ENCODE measurements at regions of chr19 and their contacts with region 1.

Region 1: GRCh38 chr19:13262450-13262849 is 112.2 kb downstream of the IER2 start:
- DNase-seq: peak in 6 of 9 donors; percentile 21 to 61 (median 52)
- ATAC-seq: peak; percentile 73
- H3K4me3 ChIP-seq: no peak overlapping the region
- H3K4me3 Mint-ChIP-seq: no peak overlapping the region
- H3K27ac ChIP-seq: no peak overlapping the region
- H3K27ac Mint-ChIP-seq: peak overlapping the region in 3 of 9 donors; percentile 5 to 84 (median 47)
- H3K4me1 ChIP-seq: no peaks in the 10 kb centered on the region
- H3K4me1 Mint-ChIP-seq: peaks cover 0 to 15% (median 0%) of the 10 kb centered on the region in 7 donors
- H3K27me3 ChIP-seq: no peaks in the 10 kb centered on the region
- H3K27me3 Mint-ChIP-seq: peaks cover 0 to 21% (median 10%) of the 10 kb centered on the region in 5 donors

Region 2: DNA sequence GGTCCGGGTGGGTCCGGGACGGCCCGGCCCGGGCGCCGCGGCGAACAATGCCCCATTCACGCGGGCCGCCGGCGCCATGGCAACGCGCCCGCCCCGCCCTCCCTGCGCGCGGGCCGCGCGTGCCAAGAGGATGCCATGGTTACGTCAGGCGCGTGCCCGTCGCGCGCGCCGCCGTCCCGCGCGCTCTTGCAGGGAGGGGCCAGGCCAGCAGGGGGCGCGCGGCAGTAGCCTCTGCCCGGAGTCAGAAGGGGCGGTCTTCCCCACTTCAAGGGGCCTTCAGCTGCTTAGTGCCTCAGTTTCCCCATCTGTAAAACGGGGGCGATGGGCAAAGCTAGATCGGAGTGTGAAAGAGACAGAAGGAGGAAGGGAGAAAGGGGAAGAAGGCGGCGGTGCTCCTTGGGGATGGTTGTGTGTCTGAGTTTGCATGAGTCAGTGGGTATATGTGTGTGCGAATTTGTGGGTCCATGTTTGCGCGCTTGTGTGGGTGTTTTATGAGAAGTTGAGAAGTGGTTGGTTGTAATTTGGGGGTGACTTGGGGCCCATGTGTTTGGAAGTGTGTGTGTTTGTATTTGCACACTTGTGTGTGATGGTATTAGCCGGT is 278.8 kb before region 1 on chr19:
- CTCF ChIA-PET with region 1: interaction called, 14 read pairs
- POLR2A ChIA-PET with region 1: no interaction called
- intact Hi-C with region 1: loop called (anchors 1 to 2 kb)
- DNase-seq: peak; percentile 72 to 93 (median 84)
- ATAC-seq: peak; percentile 94
- H3K4me3 ChIP-seq: no peak overlapping the region
- H3K4me3 Mint-ChIP-seq: no peak overlapping the region
- H3K27ac ChIP-seq: peak overlapping the region; percentile 32
- H3K27ac Mint-ChIP-seq: no peak overlapping the region
- H3K4me1 ChIP-seq: peaks cover 6 to 16% of the 10 kb centered on the region in 2 donors
- H3K4me1 Mint-ChIP-seq: peaks cover 0 to 9% (median 0%) of the 10 kb centered on the region in 7 donors
- H3K27me3 ChIP-seq: no peaks in the 10 kb centered on the region
- H3K27me3 Mint-ChIP-seq: peaks cover 0 to 11% (median 0%) of the 10 kb centered on the region in 5 donors

Region 3: GRCh38 chr19:12994701-12995595 is 267.5 kb before region 1 on chr19 and contains the start of gene NFIX:
- CTCF ChIA-PET with region 1: no interaction called
- POLR2A ChIA-PET with region 1: no interaction called
- intact Hi-C with region 1: no loop called
- DNase-seq: peak; percentile 37 to 76 (median 54)
- ATAC-seq: peak; percentile 75
- H3K4me3 ChIP-seq: peak within 1 kb of the TSS; percentile 43
- H3K4me3 Mint-ChIP-seq: peak within 1 kb of the TSS; percentile 84 to 97 (median 93)
- H3K27ac ChIP-seq: no peak within 1 kb of the TSS
- H3K27ac Mint-ChIP-seq: peak within 1 kb of the TSS; percentile 27 to 95 (median 82)
- H3K4me1 ChIP-seq: no peaks in the 10 kb centered on the region
- H3K4me1 Mint-ChIP-seq: peaks cover 6 to 22% (median 13%) of the 10 kb centered on the region in 7 donors
- H3K27me3 ChIP-seq: no peaks in the 10 kb centered on the region
- H3K27me3 Mint-ChIP-seq: peaks cover 0 to 39% (median 5%) of the 10 kb centered on the region in 5 donors
- total RNA-seq, gene NFIX: 2.4 to 7.7 (median 6.3) TPM

Region 4: GRCh38 chr19:13104360-13104847 is 158.0 kb before region 1 on chr19:
- CTCF ChIA-PET with region 1: no interaction called
- POLR2A ChIA-PET with region 1: interaction called, 4 read pairs
- intact Hi-C with region 1: loop called in 1 of 2 experiments (anchors 1 kb)
- DNase-seq: peak; percentile 48 to 78 (median 62)
- ATAC-seq: peak; percentile 67
- H3K4me3 ChIP-seq: peak overlapping the region; percentile 82
- H3K4me3 Mint-ChIP-seq: peak overlapping the region; percentile 80 to 97 (median 93)
- H3K27ac ChIP-seq: peak overlapping the region; percentile 74
- H3K27ac Mint-ChIP-seq: peak overlapping the region; percentile 71 to 94 (median 87)
- H3K4me1 ChIP-seq: peaks cover 46 to 48% of the 10 kb centered on the region in 2 donors
- H3K4me1 Mint-ChIP-seq: peaks cover 0 to 36% (median 30%) of the 10 kb centered on the region in 7 donors
- H3K27me3 ChIP-seq: no peaks in the 10 kb centered on the region
- H3K27me3 Mint-ChIP-seq: peaks cover 0 to 3% (median 0%) of the 10 kb centered on the region in 5 donors

Region 5: GRCh38 chr19:13808856-13809255 is 546.4 kb after region 1 on chr19:
- CTCF ChIA-PET with region 1: no interaction called
- POLR2A ChIA-PET with region 1: no interaction called
- intact Hi-C with region 1: no loop called
- DNase-seq: no peak
- ATAC-seq: no peak
- H3K4me3 ChIP-seq: no peak overlapping the region
- H3K4me3 Mint-ChIP-seq: no peak overlapping the region
- H3K27ac ChIP-seq: no peak overlapping the region
- H3K27ac Mint-ChIP-seq: no peak overlapping the region
- H3K4me1 ChIP-seq: no peaks in the 10 kb centered on the region
- H3K4me1 Mint-ChIP-seq: peaks cover 0 to 4% (median 0%) of the 10 kb centered on the region in 7 donors
- H3K27me3 ChIP-seq: no peaks in the 10 kb centered on the region
- H3K27me3 Mint-ChIP-seq: no peaks in the 10 kb centered on the region

Measured in naive thymus-derived CD4-positive, alpha-beta T cell (primary cell).